ENCODE measurements at regions of chr19 and their contacts with region 1.

Region 1: DNA sequence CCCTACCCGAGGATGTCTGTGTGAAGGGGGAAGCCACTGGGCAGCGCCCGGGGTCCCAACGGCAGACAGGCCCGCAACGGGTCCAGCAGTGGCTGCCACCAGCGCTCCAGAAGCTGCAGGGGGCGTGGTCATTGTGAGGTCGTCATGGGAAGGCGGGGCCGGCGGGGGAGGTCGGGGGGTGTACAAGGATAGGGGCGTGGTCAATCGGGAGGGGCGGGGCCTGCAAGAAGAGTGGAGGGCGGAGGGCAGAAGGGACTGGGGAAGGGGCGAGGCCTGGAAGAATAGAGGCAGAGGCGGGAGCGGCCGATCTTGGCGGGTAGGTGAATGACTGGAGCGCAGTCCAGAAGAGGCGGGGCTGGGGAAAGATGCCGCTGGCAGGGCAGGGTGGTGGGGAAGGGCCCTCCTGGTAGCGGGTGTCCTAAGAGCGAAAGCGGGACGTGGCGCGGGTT is 4.4 kb downstream of the FUZ start:
- DNase-seq: peak; percentile 73 to 96
- H3K4me3 ChIP-seq: peak overlapping the region; percentile 71 to 80
- H3K27ac ChIP-seq: peak overlapping the region; percentile 77
- H3K4me1 ChIP-seq: peaks cover 6 to 14% of the 10 kb centered on the region in 2 donors
- H3K27me3 ChIP-seq: no peaks in the 10 kb centered on the region
- CTCF ChIP-seq: no peak

Region 2: DNA sequence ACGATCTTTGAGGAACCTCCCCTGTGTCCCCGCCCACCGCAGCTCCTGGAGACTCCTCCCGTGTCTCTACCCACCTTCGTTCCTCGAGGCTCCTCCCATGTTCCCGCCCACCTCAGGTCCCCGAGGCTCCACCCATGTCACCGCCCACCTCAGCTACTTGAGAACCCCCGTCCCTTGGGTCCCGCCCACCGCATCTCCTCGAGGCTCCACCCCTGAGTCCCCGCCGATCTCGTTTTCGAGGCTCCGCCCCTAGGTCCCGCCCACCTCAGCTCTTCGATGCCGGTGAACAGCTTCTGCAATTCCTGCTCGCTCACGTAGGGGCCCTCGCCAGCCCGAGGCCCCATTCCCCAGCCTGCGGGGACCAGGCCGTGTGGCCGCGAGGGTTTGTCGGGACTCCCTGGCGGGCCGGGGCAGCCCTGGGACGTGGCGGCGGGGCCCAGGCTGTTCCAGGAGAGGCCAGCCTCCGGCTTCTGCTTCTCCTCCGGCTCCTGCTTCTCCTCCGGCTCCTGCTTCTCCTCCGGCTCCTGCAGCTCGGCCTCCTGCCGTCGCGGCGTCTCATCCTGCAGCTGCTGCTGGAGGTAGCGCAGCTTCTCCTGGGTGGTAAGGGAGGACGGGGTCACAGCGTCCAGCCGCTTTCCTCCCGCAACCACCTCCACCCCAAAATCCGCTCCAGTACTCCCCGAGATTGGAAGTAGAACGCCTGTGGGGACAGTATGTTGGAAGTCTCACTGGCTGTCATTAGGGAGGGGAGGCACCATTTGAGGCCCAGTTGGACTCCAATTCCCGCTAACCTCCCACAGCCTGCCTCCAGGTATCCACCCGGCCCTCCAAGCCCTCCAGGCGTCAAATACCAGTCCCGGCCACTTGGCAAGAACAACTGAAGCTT is 62.3 kb before region 1 on chr19:
- intact Hi-C with region 1: loop called (anchors 2 kb)
- DNase-seq: peak in 1 of 2 donors; percentile 74
- H3K4me3 ChIP-seq: no peak overlapping the region
- H3K27ac ChIP-seq: no peak overlapping the region
- H3K4me1 ChIP-seq: no peaks in the 10 kb centered on the region
- H3K27me3 ChIP-seq: no peaks in the 10 kb centered on the region
- CTCF ChIP-seq: no peak

Region 3: DNA sequence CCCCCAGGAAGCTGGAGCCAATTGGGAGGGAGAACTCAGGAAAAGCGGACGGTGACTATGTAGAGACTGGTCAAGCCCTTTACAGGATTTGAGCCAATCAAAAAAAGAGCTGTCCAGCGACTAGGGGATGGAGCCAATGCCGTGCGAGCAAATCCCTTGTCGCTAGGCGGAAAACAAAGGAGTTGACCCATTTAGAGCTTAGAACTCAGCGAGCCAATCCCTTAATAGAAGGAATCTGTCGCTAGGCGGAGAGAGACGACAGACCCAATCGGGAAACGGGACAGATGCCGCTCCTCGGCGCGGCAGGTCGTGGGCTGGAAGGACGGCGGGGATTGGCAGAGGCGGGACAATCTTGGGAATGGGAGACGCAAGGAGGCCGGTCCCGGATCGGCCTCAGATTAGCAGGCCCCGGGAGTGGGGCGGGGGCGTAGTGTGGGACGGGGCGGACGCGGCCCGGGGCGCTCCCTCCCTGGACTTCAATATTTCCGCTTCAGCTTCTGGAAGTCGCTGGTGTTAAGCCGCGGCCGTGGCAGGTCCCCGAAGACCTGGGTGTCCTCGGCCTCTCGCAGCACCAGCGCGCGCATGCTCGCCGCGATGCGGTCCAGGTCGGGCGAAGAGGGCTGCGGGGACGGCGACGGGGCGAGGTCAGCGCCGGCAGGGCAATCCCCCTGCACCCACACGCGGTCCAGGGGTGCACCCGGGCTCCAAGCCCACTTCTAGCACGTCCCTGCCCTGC is 60.9 kb after region 1 on chr19:
- intact Hi-C with region 1: loop called (anchors 2 kb)
- DNase-seq: peak; percentile 95 to 98
- H3K4me3 ChIP-seq: peak overlapping the region; percentile 72 to 74
- H3K27ac ChIP-seq: peak overlapping the region; percentile 93 to 97
- H3K4me1 ChIP-seq: peaks cover 19 to 32% of the 10 kb centered on the region in 2 donors
- H3K27me3 ChIP-seq: no peaks in the 10 kb centered on the region
- CTCF ChIP-seq: no peak

Region 4: DNA sequence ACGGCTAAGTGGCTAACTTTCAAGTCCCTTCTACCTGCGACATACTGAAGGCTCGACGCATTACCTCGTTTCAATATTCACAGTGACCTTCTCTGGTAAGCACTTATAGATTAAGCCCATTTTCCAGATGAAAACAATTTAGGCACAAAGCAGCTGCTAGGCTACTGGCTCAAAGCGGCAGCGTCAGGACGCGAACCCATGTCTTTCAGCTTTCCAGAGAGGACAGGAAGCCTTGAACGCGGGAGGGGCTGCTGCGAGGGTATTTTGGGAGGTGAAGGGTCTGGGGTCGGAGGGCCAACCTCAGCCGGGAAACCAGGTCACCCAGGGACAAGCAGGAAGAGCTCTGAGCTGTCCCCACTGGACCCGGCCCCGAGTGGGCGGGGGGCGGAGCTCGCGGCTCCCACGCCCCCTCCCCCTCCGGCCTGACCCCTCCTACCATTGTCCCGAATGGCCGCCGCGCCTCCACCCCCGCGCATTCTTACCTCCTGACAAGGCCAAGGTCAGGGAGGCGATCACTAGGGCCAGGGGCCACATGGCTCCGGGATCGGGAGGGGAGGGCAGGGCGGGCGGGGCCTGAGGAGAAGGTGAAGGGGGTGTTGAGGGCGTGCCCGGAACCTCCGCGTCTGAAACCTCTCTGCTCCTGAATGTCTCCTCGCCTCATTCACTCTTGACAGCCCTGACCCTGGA is 1255.9 kb after region 1 on chr19 and contains the start of gene KLK13:
- intact Hi-C with region 1: no loop called
- DNase-seq: no peak
- H3K4me3 ChIP-seq: peak within 1 kb of the TSS in 1 of 2 donors; percentile 18
- H3K27ac ChIP-seq: no peak within 1 kb of the TSS
- H3K4me1 ChIP-seq: no peaks in the 10 kb centered on the region
- H3K27me3 ChIP-seq: no peaks in the 10 kb centered on the region
- CTCF ChIP-seq: no peak
- total RNA-seq, gene KLK13: not detected